ENCODE measurements at regions of chr2 and their contacts with region 1.

Region 1: DNA sequence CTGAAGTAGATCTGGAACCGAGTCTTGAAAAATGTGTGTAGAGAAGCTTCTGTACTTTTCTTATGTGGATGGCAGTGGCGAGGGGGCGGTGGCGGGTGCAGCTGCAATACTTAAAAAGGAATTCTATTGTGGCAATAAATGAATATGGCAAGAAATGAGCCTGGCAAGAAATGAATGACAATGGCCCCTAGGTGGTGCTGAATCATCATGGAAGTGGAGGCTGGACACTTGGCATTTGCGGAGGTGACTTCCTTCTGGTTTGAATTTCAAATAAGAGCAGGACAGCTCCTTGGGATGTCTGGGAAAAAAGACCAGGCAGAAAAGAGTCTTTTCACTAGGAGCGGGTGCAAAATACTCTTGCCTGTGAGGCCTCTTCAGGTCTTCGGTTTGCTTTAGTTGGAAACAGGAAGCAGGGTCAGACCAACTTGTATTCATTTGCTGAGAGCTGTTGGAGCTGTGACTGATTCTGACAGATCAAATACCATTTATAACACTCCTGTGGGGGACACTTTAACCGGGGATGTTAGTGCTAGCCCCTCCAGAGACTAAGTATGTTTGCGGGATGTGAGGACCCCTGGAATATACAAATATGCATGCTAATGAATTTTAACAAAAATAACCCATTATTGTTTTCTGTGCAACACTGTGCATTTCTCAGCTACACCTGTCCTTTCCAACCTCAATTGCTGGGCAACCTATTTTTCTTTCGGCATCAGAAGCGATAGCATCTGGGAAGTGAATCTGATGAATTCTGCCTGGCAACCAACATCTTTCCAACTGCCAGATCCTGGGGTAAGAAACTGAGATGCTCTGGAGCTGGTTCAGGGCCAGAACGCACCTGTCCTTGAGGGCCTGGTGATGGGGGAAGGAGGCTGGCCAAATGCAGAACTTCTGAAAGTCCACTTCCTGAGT is 35.4 kb downstream of the FASTKD2 start:
- DNase-seq: peak; percentile 21
- ATAC-seq: peak; percentile 47
- H3K4me3 Mint-ChIP-seq: peak overlapping the region; percentile 76
- H3K27ac Mint-ChIP-seq: no peak overlapping the region
- H3K4me1 Mint-ChIP-seq: peaks cover 12% of the 10 kb centered on the region
- H3K27me3 Mint-ChIP-seq: no peaks in the 10 kb centered on the region
- CTCF ChIP-seq: no peak

Region 2: GRCh38 chr2:206989306-206989705 is 188.5 kb after region 1 on chr2:
- CTCF ChIA-PET with region 1: interaction called, 4 read pairs
- POLR2A ChIA-PET with region 1: no interaction called
- intact Hi-C with region 1: loop called (anchors 1 kb)
- DNase-seq: no peak
- ATAC-seq: peak; percentile 66
- H3K4me3 Mint-ChIP-seq: no peak overlapping the region
- H3K27ac Mint-ChIP-seq: no peak overlapping the region
- H3K4me1 Mint-ChIP-seq: peaks cover 3% of the 10 kb centered on the region
- H3K27me3 Mint-ChIP-seq: peaks cover 15% of the 10 kb centered on the region
- CTCF ChIP-seq: peak; percentile 33

Region 3: DNA sequence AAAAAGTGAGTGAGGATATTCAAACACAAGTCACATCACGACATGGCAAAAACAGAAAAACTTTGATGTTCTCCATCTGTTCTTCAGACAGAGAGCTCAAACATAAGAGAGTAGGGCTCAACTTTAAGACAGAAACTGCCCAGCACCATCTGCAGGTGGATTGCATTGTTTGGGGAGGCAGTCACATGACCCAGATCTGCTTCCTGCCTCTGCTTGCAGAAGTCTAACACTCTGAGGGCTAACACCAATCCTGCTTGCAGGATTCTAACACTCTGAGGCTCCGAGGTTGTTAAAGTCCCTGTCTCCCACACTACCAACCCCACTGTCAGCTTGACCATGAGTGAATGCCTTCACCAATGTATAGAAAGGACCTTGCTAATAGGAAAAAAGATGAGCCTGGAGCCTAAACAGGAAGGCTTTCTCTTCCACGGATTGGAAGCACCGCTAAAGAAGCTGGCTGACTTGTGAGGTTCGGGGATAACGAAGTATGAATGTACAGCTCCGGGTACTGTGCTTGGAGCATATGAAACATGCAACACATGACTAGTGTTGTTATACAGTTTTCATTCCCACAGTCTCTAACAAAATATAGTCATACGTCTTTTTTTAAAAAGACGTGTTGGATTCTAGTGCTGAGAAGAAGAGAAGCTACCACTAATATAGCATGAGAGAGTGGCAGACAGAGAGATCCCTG is 552.4 kb after region 1 on chr2:
- CTCF ChIA-PET with region 1: interaction called, 3 read pairs
- POLR2A ChIA-PET with region 1: no interaction called
- intact Hi-C with region 1: loop called (anchors 10 kb)
- DNase-seq: no peak
- ATAC-seq: peak; percentile 40
- H3K4me3 Mint-ChIP-seq: no peak overlapping the region
- H3K27ac Mint-ChIP-seq: no peak overlapping the region
- H3K4me1 Mint-ChIP-seq: peaks cover 2% of the 10 kb centered on the region
- H3K27me3 Mint-ChIP-seq: no peaks in the 10 kb centered on the region
- CTCF ChIP-seq: no peak

Region 4: DNA sequence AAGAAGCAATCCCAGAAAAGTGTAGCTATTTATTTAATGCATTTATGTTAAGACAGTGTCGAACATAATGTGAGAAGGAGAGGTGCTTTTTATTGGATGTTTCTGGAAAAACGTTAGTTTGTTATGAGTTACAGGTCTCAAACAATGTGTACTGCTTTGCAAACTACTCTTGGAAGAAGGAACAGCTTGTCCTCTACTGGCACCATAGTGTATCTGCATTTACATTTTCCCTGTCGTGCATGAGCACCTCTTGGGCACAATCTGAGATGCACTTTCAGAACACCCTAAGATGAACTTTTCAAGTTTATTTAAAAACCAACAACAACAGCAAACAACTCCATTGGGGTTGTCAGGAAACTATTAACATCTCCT is 933.5 kb after region 1 on chr2:
- CTCF ChIA-PET with region 1: no interaction called
- POLR2A ChIA-PET with region 1: no interaction called
- intact Hi-C with region 1: loop called (anchors 2 kb)
- DNase-seq: no peak
- ATAC-seq: peak; percentile 40
- H3K4me3 Mint-ChIP-seq: no peak overlapping the region
- H3K27ac Mint-ChIP-seq: no peak overlapping the region
- H3K4me1 Mint-ChIP-seq: peaks cover 7% of the 10 kb centered on the region
- H3K27me3 Mint-ChIP-seq: no peaks in the 10 kb centered on the region
- CTCF ChIP-seq: no peak

Region 5: DNA sequence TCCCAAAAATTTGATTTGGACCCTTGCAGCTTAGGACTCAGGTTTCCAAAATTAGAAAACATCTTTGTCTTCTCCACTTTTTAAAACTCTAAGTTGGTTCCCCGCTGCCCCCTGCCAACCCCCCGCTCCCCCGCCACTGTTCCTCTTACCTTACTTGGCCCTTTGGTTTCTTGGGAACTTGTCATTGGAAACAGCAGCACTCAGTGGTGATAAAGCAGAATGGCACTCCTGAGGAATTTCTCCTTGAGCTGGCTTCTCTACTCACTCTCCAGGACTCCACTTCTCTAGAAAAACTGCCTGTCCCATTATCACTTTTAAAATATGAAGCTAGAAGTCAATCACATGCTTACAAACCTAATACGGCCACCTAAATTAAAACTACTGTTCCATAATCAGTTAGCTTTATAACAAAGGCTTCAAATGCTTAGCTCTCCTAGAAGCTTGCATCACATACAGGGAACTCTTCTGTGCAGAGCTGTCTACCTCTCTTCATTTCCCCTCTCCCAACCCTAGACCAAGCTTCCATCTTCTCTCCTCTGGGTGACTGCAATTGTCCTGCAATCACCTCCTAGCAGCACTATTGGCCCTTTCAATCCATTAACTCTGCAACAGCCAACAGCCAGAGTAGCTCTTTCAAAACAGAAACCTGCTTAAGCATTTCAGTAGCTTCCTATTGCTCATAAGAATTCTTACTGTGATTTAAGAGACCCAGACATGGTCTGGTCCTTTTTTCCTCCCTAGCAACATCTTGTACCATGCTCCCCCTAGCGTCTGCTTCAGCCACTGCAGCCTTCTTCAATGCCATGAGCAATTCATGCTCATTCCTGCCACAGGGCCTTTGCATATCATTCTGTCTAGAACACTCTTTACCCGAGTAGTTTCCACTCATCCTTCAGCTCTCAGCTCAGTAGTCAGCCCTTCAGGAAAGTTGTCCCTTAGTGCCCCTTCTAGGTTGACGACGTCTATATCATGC is 1239.7 kb after region 1 on chr2:
- CTCF ChIA-PET with region 1: interaction called, 6 read pairs
- POLR2A ChIA-PET with region 1: no interaction called
- intact Hi-C with region 1: loop called (anchors 2 kb)
- DNase-seq: peak; percentile 41
- ATAC-seq: peak; percentile 91
- H3K4me3 Mint-ChIP-seq: no peak overlapping the region
- H3K27ac Mint-ChIP-seq: no peak overlapping the region
- H3K4me1 Mint-ChIP-seq: no peaks in the 10 kb centered on the region
- H3K27me3 Mint-ChIP-seq: peaks cover 2% of the 10 kb centered on the region
- CTCF ChIP-seq: peak; percentile 47

Region 6: DNA sequence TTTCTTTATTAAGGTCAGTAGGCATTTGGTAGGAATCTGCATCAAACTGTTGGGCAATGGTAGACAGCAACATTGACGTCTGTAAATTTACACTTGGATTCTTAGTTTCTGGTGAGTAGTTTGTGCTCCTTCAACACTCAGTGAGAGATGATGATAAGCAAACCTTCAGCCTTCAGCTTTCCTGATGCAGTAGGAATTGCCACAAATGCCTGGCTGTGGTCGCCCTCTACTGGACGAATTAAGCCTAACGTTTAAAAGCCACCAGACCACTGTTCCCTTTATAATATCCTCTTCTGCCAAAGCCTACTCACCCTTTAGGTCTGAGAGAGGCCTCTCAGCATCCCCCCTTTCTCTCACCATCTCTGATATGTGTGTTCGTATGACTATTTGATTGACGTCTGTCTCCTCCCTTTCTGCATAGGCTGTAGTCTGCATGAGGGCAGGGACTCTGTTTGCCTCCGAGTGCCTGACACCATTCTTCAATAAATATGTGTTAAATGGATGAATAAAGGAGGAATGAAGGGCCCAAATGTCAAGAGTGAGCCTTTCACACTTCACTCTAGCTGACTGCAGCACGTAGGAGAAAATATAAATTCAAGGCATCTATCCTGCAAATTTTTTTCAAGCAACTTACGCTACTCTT is 1271.6 kb after region 1 on chr2:
- CTCF ChIA-PET with region 1: interaction called, 4 read pairs
- POLR2A ChIA-PET with region 1: no interaction called
- intact Hi-C with region 1: loop called (anchors 1 kb)
- DNase-seq: no peak
- ATAC-seq: peak; percentile 71
- H3K4me3 Mint-ChIP-seq: no peak overlapping the region
- H3K27ac Mint-ChIP-seq: no peak overlapping the region
- H3K4me1 Mint-ChIP-seq: no peaks in the 10 kb centered on the region
- H3K27me3 Mint-ChIP-seq: peaks cover 7% of the 10 kb centered on the region
- CTCF ChIP-seq: peak; percentile 63

Measured in activated B cell treated with CpG ODN at 0.5 μM for 24 hours (primary cell).